ENCODE measurements at regions of chr1 and their contacts with region 1.

Region 1: GRCh38 chr1:92831762-92832536 is at the start of gene RPL5:
- DNase-seq: peak; percentile 93 to 99 (median 97)
- ATAC-seq: peak; percentile 86
- H3K4me3 ChIP-seq: peak within 1 kb of the TSS; percentile 96 to 100
- H3K4me3 Mint-ChIP-seq: peak within 1 kb of the TSS; percentile 98
- H3K27ac ChIP-seq: peak within 1 kb of the TSS; percentile 84 to 98
- H3K27ac Mint-ChIP-seq: peak within 1 kb of the TSS; percentile 99
- H3K4me1 ChIP-seq: peaks cover 37% of the 10 kb centered on the region
- H3K4me1 Mint-ChIP-seq: peaks cover 49% of the 10 kb centered on the region
- H3K27me3 ChIP-seq: no peaks in the 10 kb centered on the region
- H3K27me3 Mint-ChIP-seq: no peaks in the 10 kb centered on the region
- CTCF ChIP-seq: peak; percentile 90
- total RNA-seq, gene RPL5: 1,826 to 1,914 TPM

Region 2: GRCh38 chr1:91021686-91022517 is 1810.0 kb before region 1 on chr1 and contains the start of gene ZNF644:
- CTCF ChIA-PET with region 1: no interaction called
- POLR2A ChIA-PET with region 1: no interaction called
- intact Hi-C with region 1: loop called (anchors 5 to 10 kb)
- DNase-seq: peak; percentile 76 to 97 (median 89)
- ATAC-seq: peak; percentile 84
- H3K4me3 ChIP-seq: peak within 1 kb of the TSS; percentile 75 to 98
- H3K4me3 Mint-ChIP-seq: peak within 1 kb of the TSS; percentile 97
- H3K27ac ChIP-seq: peak within 1 kb of the TSS; percentile 99 to 100
- H3K27ac Mint-ChIP-seq: peak within 1 kb of the TSS; percentile 99
- H3K4me1 ChIP-seq: peaks cover 49% of the 10 kb centered on the region
- H3K4me1 Mint-ChIP-seq: peaks cover 64% of the 10 kb centered on the region
- H3K27me3 ChIP-seq: no peaks in the 10 kb centered on the region
- H3K27me3 Mint-ChIP-seq: no peaks in the 10 kb centered on the region
- CTCF ChIP-seq: no peak
- total RNA-seq, gene ZNF644: 105 to 109 TPM

Region 3: DNA sequence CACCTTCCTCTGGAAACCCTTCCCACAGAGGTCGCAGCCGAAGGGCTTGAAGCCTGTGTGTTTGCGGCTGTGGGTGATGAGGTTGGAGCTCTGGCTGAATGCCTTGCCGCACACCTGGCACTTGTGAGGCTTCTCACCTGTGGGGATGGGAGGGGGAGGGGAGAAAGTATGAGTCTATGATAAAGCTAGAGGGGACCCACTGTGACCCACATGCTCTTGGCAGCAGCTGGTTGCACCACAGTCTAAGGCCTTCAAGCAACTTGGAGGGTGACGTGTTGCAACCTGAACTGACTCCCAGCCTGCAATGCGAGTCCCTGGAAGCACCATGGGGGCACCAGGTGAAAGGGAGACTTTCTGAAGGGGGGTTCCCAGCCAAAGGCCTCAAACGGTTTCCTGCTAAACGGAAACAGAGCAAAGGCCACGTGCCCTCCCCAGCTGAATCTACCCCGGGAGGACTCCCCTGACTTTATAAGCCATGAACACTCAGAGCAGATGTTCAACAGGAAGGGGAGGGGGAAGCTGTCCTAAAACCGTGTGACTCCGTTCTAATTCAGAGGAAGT is 355.8 kb before region 1 on chr1:
- CTCF ChIA-PET with region 1: no interaction called
- POLR2A ChIA-PET with region 1: no interaction called
- intact Hi-C with region 1: loop called in 1 of 2 experiments (anchors 10 kb)
- DNase-seq: peak; percentile 15 to 93 (median 64)
- ATAC-seq: peak; percentile 90
- H3K4me3 ChIP-seq: no peak overlapping the region
- H3K4me3 Mint-ChIP-seq: peak overlapping the region; percentile 26
- H3K27ac ChIP-seq: peak overlapping the region in 1 of 2 experiments; percentile 70
- H3K27ac Mint-ChIP-seq: peak overlapping the region; percentile 81
- H3K4me1 ChIP-seq: peaks cover 41% of the 10 kb centered on the region
- H3K4me1 Mint-ChIP-seq: peaks cover 64% of the 10 kb centered on the region
- H3K27me3 ChIP-seq: no peaks in the 10 kb centered on the region
- H3K27me3 Mint-ChIP-seq: no peaks in the 10 kb centered on the region
- CTCF ChIP-seq: no peak

Region 4: DNA sequence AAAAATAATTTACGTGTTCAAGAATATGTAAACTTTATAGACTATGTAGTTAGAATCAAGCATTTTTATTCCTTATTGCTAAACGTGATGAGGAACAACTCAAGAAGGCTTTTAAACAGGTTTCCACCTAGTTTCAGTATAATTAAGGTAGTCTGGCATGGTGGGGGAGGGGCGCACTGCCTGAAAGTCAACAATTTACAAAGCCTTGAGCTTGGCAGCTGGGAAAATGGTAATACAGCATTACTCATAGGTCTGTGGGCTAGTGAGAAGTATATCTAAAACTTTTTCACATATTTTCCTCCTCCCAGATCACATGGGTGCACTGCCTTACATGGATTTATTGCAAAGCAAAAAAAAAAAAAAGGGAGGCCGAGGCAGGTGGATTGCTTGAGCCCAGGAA is 122.2 kb before region 1 on chr1:
- CTCF ChIA-PET with region 1: no interaction called
- POLR2A ChIA-PET with region 1: no interaction called
- intact Hi-C with region 1: no loop called
- DNase-seq: no peak
- ATAC-seq: no peak
- H3K4me3 ChIP-seq: no peak overlapping the region
- H3K4me3 Mint-ChIP-seq: no peak overlapping the region
- H3K27ac ChIP-seq: no peak overlapping the region
- H3K27ac Mint-ChIP-seq: no peak overlapping the region
- H3K4me1 ChIP-seq: no peaks in the 10 kb centered on the region
- H3K4me1 Mint-ChIP-seq: no peaks in the 10 kb centered on the region
- H3K27me3 ChIP-seq: no peaks in the 10 kb centered on the region
- H3K27me3 Mint-ChIP-seq: peaks cover 2% of the 10 kb centered on the region
- CTCF ChIP-seq: no peak

Region 5: GRCh38 chr1:92858564-92859399 is 26.8 kb after region 1 on chr1:
- CTCF ChIA-PET with region 1: interaction called, 13 read pairs
- POLR2A ChIA-PET with region 1: interaction called, 4 read pairs
- intact Hi-C with region 1: loop called in 1 of 2 experiments (anchors 2 kb)
- DNase-seq: peak; percentile 9 to 88 (median 47)
- ATAC-seq: peak; percentile 97
- H3K4me3 ChIP-seq: peak overlapping the region in 1 of 2 experiments; percentile 4
- H3K4me3 Mint-ChIP-seq: peak overlapping the region; percentile 68
- H3K27ac ChIP-seq: no peak overlapping the region
- H3K27ac Mint-ChIP-seq: peak overlapping the region; percentile 73
- H3K4me1 ChIP-seq: peaks cover 8% of the 10 kb centered on the region
- H3K4me1 Mint-ChIP-seq: peaks cover 17% of the 10 kb centered on the region
- H3K27me3 ChIP-seq: no peaks in the 10 kb centered on the region
- H3K27me3 Mint-ChIP-seq: no peaks in the 10 kb centered on the region
- CTCF ChIP-seq: peak; percentile 98

Region 6: GRCh38 chr1:93078986-93079654 is 247.2 kb after region 1 on chr1 and contains the start of gene MTF2:
- CTCF ChIA-PET with region 1: no interaction called
- POLR2A ChIA-PET with region 1: interaction called, 7 read pairs
- intact Hi-C with region 1: loop called in 1 of 2 experiments (anchors 5 kb)
- DNase-seq: peak; percentile 85 to 96 (median 91)
- ATAC-seq: peak; percentile 86
- H3K4me3 ChIP-seq: peak within 1 kb of the TSS; percentile 91 to 92
- H3K4me3 Mint-ChIP-seq: peak within 1 kb of the TSS; percentile 97
- H3K27ac ChIP-seq: peak within 1 kb of the TSS; percentile 76 to 90
- H3K27ac Mint-ChIP-seq: peak within 1 kb of the TSS; percentile 96
- H3K4me1 ChIP-seq: peaks cover 39% of the 10 kb centered on the region
- H3K4me1 Mint-ChIP-seq: peaks cover 50% of the 10 kb centered on the region
- H3K27me3 ChIP-seq: no peaks in the 10 kb centered on the region
- H3K27me3 Mint-ChIP-seq: no peaks in the 10 kb centered on the region
- CTCF ChIP-seq: no peak
- total RNA-seq, gene MTF2: 41.4 to 43.3 TPM

Region 7: DNA sequence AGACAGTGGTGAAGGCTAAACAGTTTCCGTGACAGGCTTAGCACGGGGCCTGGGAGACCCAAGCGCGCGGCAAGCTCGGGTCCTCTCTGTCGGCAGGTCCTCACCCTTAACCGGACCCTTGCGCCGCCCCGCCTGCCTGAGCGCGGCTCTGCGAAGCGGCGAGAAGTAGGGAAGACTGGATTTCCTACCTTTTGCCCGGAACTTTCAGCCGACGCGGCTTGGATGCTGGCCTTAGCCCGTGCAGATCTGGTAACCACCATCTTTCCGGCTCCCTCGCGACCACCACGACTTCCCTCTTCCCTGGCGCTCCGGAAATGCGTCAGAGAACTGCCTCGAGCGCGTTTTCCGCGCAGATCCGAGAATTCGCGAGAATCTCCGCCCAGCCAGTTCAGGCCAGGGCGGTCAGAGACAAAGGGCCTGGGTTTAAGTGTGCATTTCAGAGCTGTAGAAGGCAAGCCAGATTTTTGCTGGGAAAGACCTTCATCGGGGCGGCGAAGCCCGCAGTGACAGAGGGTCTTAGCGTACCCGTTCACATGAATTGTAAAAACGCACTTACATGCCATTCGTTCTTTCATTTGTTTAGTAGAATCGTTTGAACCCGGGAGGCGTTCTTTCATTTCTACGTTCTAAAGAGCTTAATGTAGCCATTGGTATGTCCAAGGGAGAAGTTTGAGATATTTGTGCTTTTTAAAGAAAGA is 1047.1 kb after region 1 on chr1 and contains the start of gene DNTTIP2:
- CTCF ChIA-PET with region 1: no interaction called
- POLR2A ChIA-PET with region 1: no interaction called
- intact Hi-C with region 1: loop called in 1 of 2 experiments (anchors 1 kb)
- DNase-seq: peak; percentile 74 to 95 (median 88)
- ATAC-seq: peak; percentile 81
- H3K4me3 ChIP-seq: peak within 1 kb of the TSS; percentile 87 to 99
- H3K4me3 Mint-ChIP-seq: peak within 1 kb of the TSS; percentile 95
- H3K27ac ChIP-seq: peak within 1 kb of the TSS; percentile 95 to 99
- H3K27ac Mint-ChIP-seq: peak within 1 kb of the TSS; percentile 98
- H3K4me1 ChIP-seq: peaks cover 32% of the 10 kb centered on the region
- H3K4me1 Mint-ChIP-seq: peaks cover 46% of the 10 kb centered on the region
- H3K27me3 ChIP-seq: no peaks in the 10 kb centered on the region
- H3K27me3 Mint-ChIP-seq: no peaks in the 10 kb centered on the region
- CTCF ChIP-seq: no peak
- total RNA-seq, gene DNTTIP2: 126 to 130 TPM